Endothelial cell of umbilical vein (primary cell): ENCODE measurements at regions of chr2 and their contacts with region 1.

Region 1: DNA sequence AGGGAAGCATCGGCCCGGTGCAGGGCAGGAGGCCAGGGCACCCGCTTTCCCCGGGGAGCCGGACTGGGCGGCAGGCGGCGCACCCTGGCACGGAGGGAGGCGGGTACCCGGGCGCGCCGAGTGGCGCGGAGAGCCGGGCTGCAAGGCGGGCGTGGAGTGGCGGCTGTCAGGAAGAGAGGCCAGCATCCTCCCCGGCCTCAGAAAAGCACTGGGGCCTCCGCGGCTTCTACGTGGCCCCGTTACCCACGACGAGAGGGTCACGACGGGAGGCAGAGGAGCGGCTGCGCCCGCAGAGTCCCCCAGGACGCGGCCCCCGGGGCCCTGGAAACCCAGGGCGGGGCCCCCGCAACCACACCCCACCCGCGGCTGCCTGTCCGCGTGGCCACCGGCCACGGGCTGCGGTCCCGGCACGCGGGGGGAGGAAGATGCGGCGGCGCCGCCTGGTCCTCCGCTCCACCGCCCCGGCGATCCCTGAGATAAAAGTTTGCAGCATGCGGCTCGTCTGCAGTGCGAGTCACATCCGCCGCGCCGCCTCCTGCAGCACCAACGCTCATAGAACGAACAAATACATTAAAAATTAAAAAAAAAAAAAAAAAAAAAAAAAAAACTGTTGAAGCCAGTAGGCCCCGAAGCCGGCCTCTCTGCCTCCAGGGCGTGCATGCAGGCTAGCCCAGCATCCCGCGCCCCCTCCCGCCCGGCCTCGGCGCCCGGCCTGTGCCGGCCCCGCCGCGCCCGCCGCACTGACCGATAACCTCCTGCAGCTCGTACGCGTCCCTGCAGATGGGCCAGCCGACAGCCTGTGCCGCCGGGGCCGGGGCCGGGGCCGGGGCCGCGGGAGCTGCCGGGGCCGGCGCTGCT is 683 bp downstream of the STK39 start:
- DNase-seq: peak; percentile 53
- H3K4me3 ChIP-seq: peak overlapping the region; percentile 68 to 83 (median 74)
- H3K27ac ChIP-seq: peak overlapping the region; percentile 76
- H3K4me1 ChIP-seq: peaks cover 21% of the 10 kb centered on the region
- H3K27me3 ChIP-seq: peaks cover 0 to 2% of the 10 kb centered on the region in 2 experiments
- CTCF ChIP-seq: peak in 1 of 2 donors; percentile 35
- POLR2A ChIP-seq: peak; percentile 40

Region 2: DNA sequence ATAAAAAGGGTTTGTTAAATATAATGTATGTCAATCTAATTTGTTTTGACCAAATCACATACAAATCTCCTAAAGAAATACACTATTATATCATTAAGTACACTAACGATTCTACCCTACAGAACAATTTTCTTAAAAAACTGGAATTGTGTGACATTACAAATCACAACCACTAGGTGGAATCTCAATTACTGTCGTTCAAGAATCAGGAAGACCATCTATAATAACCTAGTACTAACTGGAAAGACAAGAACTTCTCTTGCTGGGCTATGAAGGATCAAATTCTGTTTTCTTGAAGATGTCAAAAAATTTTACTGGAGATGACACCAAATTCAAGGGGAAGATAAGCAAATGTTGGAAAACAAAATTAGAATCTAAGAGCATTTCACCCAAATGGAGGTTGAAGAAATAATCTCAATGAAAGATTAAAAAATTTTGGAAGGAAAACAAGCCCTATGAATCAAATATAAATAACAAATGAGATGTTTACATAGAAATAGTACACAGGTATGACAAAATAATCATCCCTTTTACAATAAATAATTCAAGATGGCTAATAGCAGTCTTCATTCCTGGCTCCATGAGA is 110.2 kb before region 1 on chr2:
- CTCF ChIA-PET with region 1: interaction called, 4 read pairs
- POLR2A ChIA-PET with region 1: no interaction called
- dilution Hi-C with region 1: no loop called
- intact Hi-C with region 1: loop called (anchors 1 kb)
- DNase-seq: peak; percentile 57
- H3K4me3 ChIP-seq: no peak overlapping the region
- H3K27ac ChIP-seq: no peak overlapping the region
- H3K4me1 ChIP-seq: peaks cover 9% of the 10 kb centered on the region
- H3K27me3 ChIP-seq: no peaks in the 10 kb centered on the region
- CTCF ChIP-seq: peak; percentile 19 to 36
- POLR2A ChIP-seq: no peak

Region 3: GRCh38 chr2:168169097-168169745 is 77.5 kb before region 1 on chr2:
- CTCF ChIA-PET with region 1: interaction called, 4 read pairs
- POLR2A ChIA-PET with region 1: no interaction called
- dilution Hi-C with region 1: no loop called
- intact Hi-C with region 1: loop called (anchors 2 kb)
- DNase-seq: peak; percentile 26
- H3K4me3 ChIP-seq: no peak overlapping the region
- H3K27ac ChIP-seq: no peak overlapping the region
- H3K4me1 ChIP-seq: peaks cover 17% of the 10 kb centered on the region
- H3K27me3 ChIP-seq: no peaks in the 10 kb centered on the region
- CTCF ChIP-seq: no peak
- POLR2A ChIP-seq: no peak

Region 4: GRCh38 chr2:168210895-168211570 is 35.7 kb before region 1 on chr2:
- CTCF ChIA-PET with region 1: no interaction called
- POLR2A ChIA-PET with region 1: no interaction called
- dilution Hi-C with region 1: no loop called
- intact Hi-C with region 1: loop called (anchors 1 kb)
- DNase-seq: peak; percentile 68
- H3K4me3 ChIP-seq: peak overlapping the region in 1 of 3 experiments; percentile 37
- H3K27ac ChIP-seq: peak overlapping the region; percentile 50
- H3K4me1 ChIP-seq: peaks cover 21% of the 10 kb centered on the region
- H3K27me3 ChIP-seq: no peaks in the 10 kb centered on the region
- CTCF ChIP-seq: no peak
- POLR2A ChIP-seq: no peak

Region 5: GRCh38 chr2:168443818-168444217 is 197.1 kb after region 1 on chr2:
- CTCF ChIA-PET with region 1: no interaction called
- POLR2A ChIA-PET with region 1: no interaction called
- dilution Hi-C with region 1: no loop called
- intact Hi-C with region 1: no loop called
- DNase-seq: no peak
- H3K4me3 ChIP-seq: no peak overlapping the region
- H3K27ac ChIP-seq: no peak overlapping the region
- H3K4me1 ChIP-seq: peaks cover 4% of the 10 kb centered on the region
- H3K27me3 ChIP-seq: no peaks in the 10 kb centered on the region
- CTCF ChIP-seq: no peak
- POLR2A ChIP-seq: no peak